ENCODE measurements at regions of chr13 and their contacts with region 1.

Region 1: GRCh38 chr13:44050450-44051063 is 170.9 kb downstream of the LACC1 start:
- DNase-seq: peak in 1 of 10 donors; percentile 15
- H3K4me3 ChIP-seq: peak overlapping the region in 2 of 59 donors; percentile 3 to 14
- H3K27ac ChIP-seq: peak overlapping the region in 3 of 59 donors; percentile 7 to 47 (median 28)
- H3K27me3 ChIP-seq: no peaks in the 10 kb centered on the region
- CTCF ChIP-seq: peak; percentile 69 to 96 (median 88)

Region 2: GRCh38 chr13:43911871-43912270 is 138.7 kb before region 1 on chr13:
- intact Hi-C with region 1: loop called (anchors 5 kb)
- DNase-seq: no peak
- H3K4me3 ChIP-seq: no peak overlapping the region
- H3K27ac ChIP-seq: peak overlapping the region in 32 of 59 donors; percentile 1 to 62 (median 38)
- H3K27me3 ChIP-seq: no peaks in the 10 kb centered on the region
- CTCF ChIP-seq: no peak

Region 3: GRCh38 chr13:44108331-44108858 is 57.8 kb after region 1 on chr13:
- intact Hi-C with region 1: loop called (anchors 10 kb)
- DNase-seq: no peak
- H3K4me3 ChIP-seq: no peak overlapping the region
- H3K27ac ChIP-seq: peak overlapping the region in 4 of 59 donors; percentile 22 to 36 (median 28)
- H3K27me3 ChIP-seq: no peaks in the 10 kb centered on the region
- CTCF ChIP-seq: no peak

Region 4: GRCh38 chr13:44132710-44133109 is 82.2 kb after region 1 on chr13:
- intact Hi-C with region 1: loop called in 1 of 2 experiments (anchors 10 kb)
- DNase-seq: peak in 8 of 10 donors; percentile 39 to 74 (median 58)
- H3K4me3 ChIP-seq: no peak overlapping the region
- H3K27ac ChIP-seq: peak overlapping the region in 35 of 59 donors; percentile 1 to 73 (median 42)
- H3K27me3 ChIP-seq: no peaks in the 10 kb centered on the region
- CTCF ChIP-seq: no peak

Region 5: DNA sequence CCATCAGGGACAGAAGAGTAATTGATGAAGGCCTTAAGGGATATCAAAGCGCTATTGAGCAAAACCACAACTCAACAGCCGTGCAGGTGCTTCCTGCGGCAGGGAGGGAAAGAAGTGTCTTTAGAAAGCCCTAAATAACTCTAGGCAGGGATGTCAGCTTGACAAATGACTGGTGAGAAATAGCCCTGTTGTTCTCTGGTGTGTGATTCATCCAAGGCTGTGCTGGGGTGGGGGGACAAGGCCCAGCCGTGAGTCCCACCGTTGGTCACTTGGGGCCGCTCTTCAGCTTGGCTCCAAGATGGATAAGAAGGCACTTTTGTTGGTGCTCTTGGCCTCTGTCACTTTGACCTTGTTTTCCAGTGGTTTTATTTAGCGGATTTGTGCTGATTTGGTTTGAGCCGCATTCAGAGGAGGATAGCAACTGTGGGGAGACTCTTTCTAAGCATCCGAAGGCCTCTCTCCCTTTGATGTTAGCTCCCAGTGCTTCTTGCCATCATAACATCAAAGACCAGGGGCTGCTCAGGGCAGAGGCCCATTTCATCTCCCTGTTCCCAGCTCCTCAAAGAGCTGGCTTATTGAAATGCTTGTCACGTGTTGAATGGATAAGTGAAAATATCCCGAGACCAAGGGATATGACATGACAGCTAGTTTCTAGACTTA is 192.8 kb after region 1 on chr13:
- intact Hi-C with region 1: loop called in 1 of 2 experiments (anchors 10 kb)
- DNase-seq: peak in 9 of 10 donors; percentile 57 to 82 (median 74)
- H3K4me3 ChIP-seq: peak overlapping the region in 1 of 59 donors; percentile 3
- H3K27ac ChIP-seq: peak overlapping the region; percentile 45 to 94 (median 85)
- H3K27me3 ChIP-seq: no peaks in the 10 kb centered on the region
- CTCF ChIP-seq: peak in 53 of 56 donors; percentile 17 to 79 (median 55)

Region 6: DNA sequence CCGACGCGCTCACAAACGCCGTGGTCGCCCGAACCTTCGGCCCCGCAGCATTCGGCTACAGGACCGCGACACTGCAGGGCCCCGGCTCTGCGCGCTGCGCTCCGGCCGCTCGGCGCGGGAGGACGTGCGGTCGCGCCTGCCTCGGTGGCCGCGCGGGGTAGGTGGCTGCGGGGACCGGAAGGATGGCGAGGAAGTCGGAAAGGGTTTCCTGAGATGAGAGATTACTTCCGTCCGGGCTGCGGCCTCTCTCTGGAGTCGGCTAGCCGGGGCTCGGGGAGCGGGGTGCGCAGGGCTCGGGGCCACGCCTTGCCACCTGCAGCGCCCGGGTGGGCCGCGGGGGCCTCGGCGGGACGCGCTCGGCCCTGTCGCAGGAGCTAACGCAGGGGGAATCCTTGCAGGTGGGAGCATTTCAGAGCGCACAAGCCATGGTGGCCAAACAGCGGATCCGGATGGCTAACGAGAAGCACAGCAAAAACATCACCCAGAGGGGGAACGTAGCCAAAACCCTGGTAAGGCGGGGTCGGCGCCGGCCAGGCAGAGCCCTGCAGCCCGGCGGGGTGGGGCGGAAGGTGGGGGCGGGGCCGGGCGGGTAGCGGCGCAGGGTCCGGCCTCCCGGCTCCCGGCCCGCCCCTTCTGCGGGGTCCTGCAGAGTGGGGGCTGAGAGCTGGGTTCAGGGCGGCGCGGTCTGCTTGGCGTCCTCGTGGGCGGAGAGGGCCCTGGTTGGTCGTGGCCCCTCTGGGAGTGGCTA is 323.2 kb after region 1 on chr13 and contains the start of gene SERP2:
- intact Hi-C with region 1: loop called in 1 of 2 experiments (anchors 10 kb)
- DNase-seq: peak in 8 of 10 donors; percentile 28 to 75 (median 54)
- H3K4me3 ChIP-seq: peak within 1 kb of the TSS; percentile 54 to 94 (median 82)
- H3K27ac ChIP-seq: peak within 1 kb of the TSS; percentile 64 to 99 (median 94)
- H3K27me3 ChIP-seq: no peaks in the 10 kb centered on the region
- CTCF ChIP-seq: peak in 3 of 56 donors; percentile 1 to 15 (median 12)
- total RNA-seq, gene SERP2: 37.0 to 96.0 (median 70.9) TPM

Measured in dorsolateral prefrontal cortex (tissue), 120 donors.